Activated naive CD4-positive, alpha-beta T cell treated with anti-CD3 and anti-CD28 coated beads, Interleukin-2, amount 10 ng/mL, durations not matched to agents 7 days and 5 days (primary cell): ENCODE measurements at regions of chr11 and their contacts with region 1.

Region 1: DNA sequence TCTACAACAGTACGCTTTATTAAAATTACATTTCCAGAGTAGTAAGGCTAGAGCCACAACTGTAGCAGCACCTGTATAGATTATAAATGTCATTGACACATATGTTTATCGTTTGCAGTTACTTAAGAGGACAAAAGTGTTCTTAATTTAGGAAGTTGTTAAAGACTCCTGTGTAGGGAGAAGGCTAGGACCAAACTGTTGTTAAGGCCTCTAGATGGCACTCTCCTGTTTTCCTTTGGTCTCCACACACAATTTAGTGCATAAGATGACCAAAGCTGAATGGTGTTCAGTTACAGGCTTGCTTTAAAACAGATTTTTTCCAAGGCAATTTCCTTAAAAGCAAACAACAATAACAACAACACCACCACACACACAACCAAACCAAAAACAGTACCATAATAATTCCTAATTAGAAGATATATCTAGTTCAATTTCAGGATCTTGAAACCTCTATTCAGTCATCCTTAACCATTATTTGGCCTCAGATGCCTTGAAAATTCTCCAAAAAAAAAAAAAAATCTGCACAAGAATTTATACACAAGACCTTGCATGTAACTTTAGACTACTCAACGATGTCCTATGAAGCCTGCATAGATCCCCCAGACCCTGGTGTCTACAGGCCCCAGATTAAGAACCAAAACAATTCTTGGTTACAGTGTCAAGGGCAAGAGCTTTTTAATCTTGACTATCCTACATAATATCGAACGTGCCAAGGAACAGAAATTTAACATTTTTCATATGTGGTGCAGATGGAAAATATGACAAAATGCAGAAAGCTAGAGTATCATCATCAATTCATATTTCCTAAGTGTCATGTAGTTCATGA is 42.6 kb upstream of the APOA1 start:
- DNase-seq: peak; percentile 38
- H3K4me3 Mint-ChIP-seq: no peak overlapping the region
- H3K27ac Mint-ChIP-seq: no peak overlapping the region
- H3K4me1 Mint-ChIP-seq: peaks cover 3% of the 10 kb centered on the region
- H3K27me3 Mint-ChIP-seq: no peaks in the 10 kb centered on the region

Region 2: DNA sequence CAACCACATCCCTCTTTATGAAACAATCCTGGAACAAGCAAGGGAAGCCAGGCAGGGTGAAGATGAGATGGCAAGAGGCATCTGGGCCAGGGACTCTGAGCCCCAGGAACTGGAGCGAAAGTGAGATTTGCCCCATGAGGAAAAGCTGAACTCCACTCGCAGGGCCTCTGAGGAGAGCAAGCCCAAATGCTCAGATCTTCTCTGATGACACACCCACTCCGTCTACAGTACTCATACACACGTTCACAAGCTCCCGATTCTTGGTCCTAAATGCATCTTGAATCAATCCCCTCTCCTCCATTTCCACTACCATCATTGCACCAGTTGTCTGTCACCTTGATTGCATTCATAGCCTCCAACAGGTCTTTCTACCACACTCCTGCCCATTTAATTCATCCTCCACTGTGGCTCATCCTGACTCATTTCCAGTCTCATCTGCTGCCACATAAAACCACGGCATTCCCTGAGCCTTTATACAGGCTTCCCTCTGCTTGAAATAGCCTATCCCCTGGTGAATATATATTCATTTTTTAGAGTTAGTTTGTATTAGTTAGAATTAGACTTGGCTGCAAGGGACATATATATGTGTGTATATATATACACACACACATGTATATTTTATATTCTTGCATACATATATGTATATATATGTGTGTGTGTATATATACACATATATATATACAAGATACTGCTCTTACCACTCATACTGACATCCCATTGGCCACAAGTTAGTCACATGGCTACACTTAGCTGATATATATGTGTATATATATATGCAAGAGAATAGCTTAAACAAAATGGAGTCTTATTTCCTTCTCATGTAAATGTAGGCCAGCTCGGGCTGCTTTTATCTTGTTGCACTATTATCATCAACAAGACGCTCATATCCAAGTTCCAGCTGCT is 86.9 kb before region 1 on chr11:
- CTCF ChIA-PET with region 1: interaction called, 12 read pairs
- DNase-seq: no peak
- H3K4me3 Mint-ChIP-seq: no peak overlapping the region
- H3K27ac Mint-ChIP-seq: no peak overlapping the region
- H3K4me1 Mint-ChIP-seq: peaks cover 13% of the 10 kb centered on the region
- H3K27me3 Mint-ChIP-seq: peaks cover 51% of the 10 kb centered on the region

Region 3: DNA sequence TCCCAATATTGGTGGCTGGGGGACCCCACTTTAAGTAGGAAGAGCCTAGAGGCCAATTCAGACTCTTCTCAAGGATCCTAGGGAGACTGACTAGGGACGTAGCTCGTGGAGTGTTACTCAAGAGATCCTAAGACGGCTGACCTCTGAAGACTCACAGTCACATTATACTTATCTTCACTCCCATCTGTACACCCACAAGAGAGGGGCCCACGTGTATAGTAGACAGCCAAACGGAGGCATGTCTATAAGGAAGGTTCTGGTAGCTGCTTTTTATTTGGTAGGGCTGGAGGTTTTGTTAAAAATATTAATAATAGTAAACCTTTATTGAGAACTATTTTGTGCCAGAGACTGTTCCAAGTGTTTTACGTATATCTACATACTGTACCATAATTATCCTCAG is 19.7 kb before region 1 on chr11:
- CTCF ChIA-PET with region 1: no interaction called
- DNase-seq: no peak
- H3K4me3 Mint-ChIP-seq: no peak overlapping the region
- H3K27ac Mint-ChIP-seq: no peak overlapping the region
- H3K4me1 Mint-ChIP-seq: peaks cover 22% of the 10 kb centered on the region
- H3K27me3 Mint-ChIP-seq: no peaks in the 10 kb centered on the region

Region 4: DNA sequence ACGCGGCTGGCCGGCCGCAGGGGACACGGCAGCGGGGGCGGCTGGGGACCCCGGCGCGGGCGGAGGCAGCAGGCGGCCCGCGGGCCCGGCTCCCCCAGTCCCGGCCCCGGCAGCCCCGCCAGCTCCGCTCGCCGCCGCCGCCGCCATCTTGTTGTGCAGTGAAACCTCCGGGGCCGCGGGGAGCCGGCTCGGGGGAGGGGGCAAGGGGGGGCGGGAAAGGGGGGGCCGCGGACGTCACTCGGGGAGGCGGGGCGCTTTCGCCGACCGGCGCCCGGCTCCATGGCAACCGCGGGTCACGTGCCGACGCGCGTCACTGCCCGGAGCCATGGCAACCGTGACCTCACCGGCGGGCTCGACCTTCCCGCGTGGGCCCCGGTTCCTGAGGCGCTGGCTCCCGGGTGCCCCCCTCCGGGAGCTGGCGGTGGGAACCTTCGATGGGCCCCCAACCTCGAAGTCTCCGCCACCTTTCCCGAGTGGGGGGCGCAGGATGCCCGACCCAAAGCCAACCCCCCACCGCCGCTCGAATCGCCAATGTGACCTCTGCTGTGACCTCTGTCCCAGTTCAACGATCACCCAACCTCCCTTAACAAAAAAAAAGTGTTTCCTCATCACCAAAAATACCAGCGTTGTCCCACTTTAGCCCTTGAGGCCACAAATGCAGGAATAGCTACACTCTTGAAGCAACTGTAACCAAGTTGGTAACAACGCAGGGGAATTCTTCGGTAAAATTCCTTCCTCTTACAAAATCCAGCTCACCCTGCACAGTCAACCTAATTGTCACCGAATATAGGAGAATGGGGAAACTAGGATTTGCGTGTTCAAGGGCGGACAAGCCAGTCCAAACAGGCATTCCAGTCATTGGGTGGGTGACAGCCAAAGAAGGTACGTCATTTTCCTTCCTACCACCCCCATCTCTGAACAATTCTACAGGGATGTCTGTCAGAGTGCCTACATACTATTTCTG is 218.5 kb after region 1 on chr11 and contains the start of gene SIK3:
- CTCF ChIA-PET with region 1: interaction called, 16 read pairs
- DNase-seq: peak; percentile 93
- H3K4me3 Mint-ChIP-seq: peak within 1 kb of the TSS; percentile 91
- H3K27ac Mint-ChIP-seq: peak within 1 kb of the TSS; percentile 85
- H3K4me1 Mint-ChIP-seq: peaks cover 46% of the 10 kb centered on the region
- H3K27me3 Mint-ChIP-seq: no peaks in the 10 kb centered on the region